Activated CD8-positive, alpha-beta memory T cell treated with anti-CD3 and anti-CD28 coated beads, Interleukin-2, amount 10 ng/mL, durations not matched to agents 7 days and 5 days (primary cell): ENCODE measurements at regions of chr6 and their contacts with region 1.

Region 1: GRCh38 chr6:149043476-149044130 is 273.9 kb upstream of the TAB2 start:
- DNase-seq: peak; percentile 62
- ATAC-seq: no peak
- H3K4me3 Mint-ChIP-seq: no peak overlapping the region
- H3K27ac Mint-ChIP-seq: no peak overlapping the region
- H3K4me1 Mint-ChIP-seq: peaks cover 60% of the 10 kb centered on the region
- H3K27me3 Mint-ChIP-seq: no peaks in the 10 kb centered on the region

Region 2: GRCh38 chr6:149054559-149055194 is 11.1 kb after region 1 on chr6:
- CTCF ChIA-PET with region 1: interaction called, 23 read pairs
- DNase-seq: no peak
- ATAC-seq: peak; percentile 22
- H3K4me3 Mint-ChIP-seq: peak overlapping the region; percentile 69
- H3K27ac Mint-ChIP-seq: peak overlapping the region; percentile 94
- H3K4me1 Mint-ChIP-seq: peaks cover 79% of the 10 kb centered on the region
- H3K27me3 Mint-ChIP-seq: no peaks in the 10 kb centered on the region

Region 3: DNA sequence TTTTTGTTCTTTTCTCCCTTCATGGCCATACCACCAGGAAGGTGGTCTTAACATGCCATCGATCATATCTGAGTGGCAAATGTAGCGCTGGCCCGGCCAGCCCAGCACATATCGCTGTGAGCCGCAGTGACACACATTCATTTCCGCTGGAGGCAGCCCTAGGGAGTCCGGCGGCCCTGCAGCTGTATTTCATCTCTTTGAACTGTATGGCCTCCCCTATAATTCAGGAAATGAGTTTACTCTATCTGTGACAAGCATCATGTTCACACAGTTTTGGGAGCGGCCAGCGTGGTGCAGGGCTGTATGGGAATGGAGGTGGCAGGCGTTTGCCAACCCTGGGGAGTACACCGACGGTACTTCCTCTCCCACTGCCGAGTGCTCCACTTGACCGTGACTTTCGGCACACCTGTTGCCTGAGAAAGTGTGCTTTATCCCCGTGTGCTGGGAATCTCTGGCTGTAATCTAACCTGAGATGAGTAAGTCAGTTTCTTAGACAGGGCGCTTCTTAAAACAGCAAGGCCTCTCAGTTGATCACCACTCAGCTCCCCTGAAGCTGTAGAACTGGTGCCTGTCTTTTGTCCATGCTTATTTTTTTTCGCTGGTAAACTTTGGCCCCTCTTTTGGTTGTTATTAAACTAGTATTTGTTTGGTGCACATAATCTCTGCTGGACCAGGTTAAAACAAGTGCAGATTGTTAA is 16.8 kb after region 1 on chr6:
- CTCF ChIA-PET with region 1: interaction called, 23 read pairs
- DNase-seq: peak; percentile 83
- ATAC-seq: peak; percentile 87
- H3K4me3 Mint-ChIP-seq: peak overlapping the region; percentile 62
- H3K27ac Mint-ChIP-seq: peak overlapping the region; percentile 92
- H3K4me1 Mint-ChIP-seq: peaks cover 73% of the 10 kb centered on the region
- H3K27me3 Mint-ChIP-seq: no peaks in the 10 kb centered on the region

Region 4: GRCh38 chr6:149065658-149066556 is 22.3 kb after region 1 on chr6:
- CTCF ChIA-PET with region 1: interaction called, 14 read pairs
- DNase-seq: peak; percentile 70
- ATAC-seq: peak; percentile 88
- H3K4me3 Mint-ChIP-seq: peak overlapping the region; percentile 35
- H3K27ac Mint-ChIP-seq: peak overlapping the region; percentile 85
- H3K4me1 Mint-ChIP-seq: peaks cover 48% of the 10 kb centered on the region
- H3K27me3 Mint-ChIP-seq: no peaks in the 10 kb centered on the region

Region 5: DNA sequence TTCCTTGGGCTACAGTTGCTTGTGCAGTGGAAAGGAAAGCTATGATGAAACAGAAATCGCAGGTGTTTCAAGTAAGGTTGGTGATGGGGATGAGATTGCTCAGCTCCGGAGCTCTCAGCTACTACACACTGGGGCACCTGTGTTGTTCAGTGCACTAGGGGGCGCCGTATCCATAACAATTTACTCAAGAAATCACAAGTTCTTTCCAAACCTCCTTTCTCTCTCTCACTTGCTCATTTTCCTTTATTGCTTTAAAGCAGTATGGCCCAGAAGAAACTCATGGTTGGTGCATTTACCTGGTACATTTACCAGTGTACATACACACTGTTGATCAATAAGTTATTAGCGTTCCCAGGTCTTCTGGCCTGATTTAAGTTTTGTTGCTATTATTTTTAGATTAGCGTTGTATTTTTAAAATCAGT is 38.7 kb after region 1 on chr6:
- CTCF ChIA-PET with region 1: interaction called, 11 read pairs
- DNase-seq: peak; percentile 94
- ATAC-seq: peak; percentile 79
- H3K4me3 Mint-ChIP-seq: peak overlapping the region; percentile 18
- H3K27ac Mint-ChIP-seq: peak overlapping the region; percentile 96
- H3K4me1 Mint-ChIP-seq: peaks cover 87% of the 10 kb centered on the region
- H3K27me3 Mint-ChIP-seq: no peaks in the 10 kb centered on the region